ENCODE measurements at regions of chr4 and their contacts with region 1.

Region 1: GRCh38 chr4:176964116-176964691 is 171.5 kb upstream of the VEGFC start:
- DNase-seq: peak; percentile 59
- H3K4me3 Mint-ChIP-seq: no peak overlapping the region
- H3K27ac Mint-ChIP-seq: peak overlapping the region; percentile 80
- H3K4me1 Mint-ChIP-seq: peaks cover 8% of the 10 kb centered on the region
- H3K27me3 Mint-ChIP-seq: no peaks in the 10 kb centered on the region
- CTCF ChIP-seq: peak; percentile 36

Region 2: GRCh38 chr4:176949029-176949428 is 15.2 kb before region 1 on chr4:
- CTCF ChIA-PET with region 1: interaction called, 6 read pairs
- POLR2A ChIA-PET with region 1: interaction called, 3 read pairs
- intact Hi-C with region 1: loop called (anchors 2 kb)
- DNase-seq: no peak
- H3K4me3 Mint-ChIP-seq: no peak overlapping the region
- H3K27ac Mint-ChIP-seq: no peak overlapping the region
- H3K4me1 Mint-ChIP-seq: no peaks in the 10 kb centered on the region
- H3K27me3 Mint-ChIP-seq: no peaks in the 10 kb centered on the region
- CTCF ChIP-seq: no peak

Region 3: DNA sequence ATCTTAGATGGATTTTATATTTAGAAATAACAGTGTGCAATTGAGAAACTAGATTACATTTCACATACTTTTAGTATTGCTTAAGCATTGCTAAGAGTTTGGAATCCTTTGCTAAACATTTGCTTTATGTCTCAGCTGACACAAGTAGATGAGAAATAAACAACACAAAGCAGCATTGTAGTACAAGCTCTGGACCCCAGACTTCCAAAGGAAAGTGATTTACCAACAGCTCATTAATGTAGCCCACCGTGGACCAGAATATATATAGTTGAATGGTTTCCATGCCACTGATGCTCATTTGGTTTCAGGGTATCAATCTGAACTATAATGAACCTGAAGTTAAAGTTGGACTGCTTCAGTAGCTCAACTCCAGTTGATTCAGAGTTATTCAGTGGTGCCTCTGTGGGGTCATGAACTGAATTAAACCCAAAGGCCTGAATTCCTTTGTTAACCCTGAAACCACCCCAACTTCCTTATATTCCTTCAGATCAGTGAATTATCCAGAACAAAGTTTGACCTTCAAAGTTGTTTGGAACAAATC is 213.4 kb after region 1 on chr4:
- CTCF ChIA-PET with region 1: no interaction called
- POLR2A ChIA-PET with region 1: no interaction called
- intact Hi-C with region 1: no loop called
- DNase-seq: no peak
- H3K4me3 Mint-ChIP-seq: no peak overlapping the region
- H3K27ac Mint-ChIP-seq: no peak overlapping the region
- H3K4me1 Mint-ChIP-seq: no peaks in the 10 kb centered on the region
- H3K27me3 Mint-ChIP-seq: no peaks in the 10 kb centered on the region
- CTCF ChIP-seq: no peak

Region 4: GRCh38 chr4:177293208-177294033 is 329.2 kb after region 1 on chr4:
- CTCF ChIA-PET with region 1: no interaction called
- POLR2A ChIA-PET with region 1: no interaction called
- intact Hi-C with region 1: no loop called
- DNase-seq: no peak
- H3K4me3 Mint-ChIP-seq: no peak overlapping the region
- H3K27ac Mint-ChIP-seq: no peak overlapping the region
- H3K4me1 Mint-ChIP-seq: no peaks in the 10 kb centered on the region
- H3K27me3 Mint-ChIP-seq: no peaks in the 10 kb centered on the region
- CTCF ChIP-seq: no peak

Measured in MCF 10A (cell line).